ENCODE measurements at regions of chr1 and their contacts with region 1.

Region 1: DNA sequence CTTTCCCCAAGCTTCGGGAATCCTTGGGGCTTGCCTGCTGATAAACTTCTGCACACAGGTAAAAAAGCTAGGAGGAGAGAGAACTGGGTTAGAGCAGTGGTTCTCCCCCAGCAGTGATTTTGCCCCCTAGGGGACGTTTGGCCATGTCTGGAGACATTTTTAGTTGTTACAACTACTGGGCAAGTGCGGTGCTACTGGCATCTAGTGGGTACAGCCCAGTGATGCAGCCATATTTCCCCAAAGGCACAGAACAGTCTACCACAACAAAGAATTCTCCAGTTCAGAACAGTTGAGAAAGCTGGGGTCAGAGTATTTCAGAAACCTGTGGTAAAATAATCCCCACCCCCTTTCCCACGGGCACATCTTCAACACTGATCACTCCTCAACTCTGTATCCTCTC is 41.3 kb downstream of the LRRC71 start:
- DNase-seq: no peak
- H3K4me3 ChIP-seq: no peak overlapping the region
- H3K27ac ChIP-seq: no peak overlapping the region
- H3K4me1 ChIP-seq: no peaks in the 10 kb centered on the region
- H3K27me3 ChIP-seq: no peaks in the 10 kb centered on the region
- CTCF ChIP-seq: no peak

Region 2: DNA sequence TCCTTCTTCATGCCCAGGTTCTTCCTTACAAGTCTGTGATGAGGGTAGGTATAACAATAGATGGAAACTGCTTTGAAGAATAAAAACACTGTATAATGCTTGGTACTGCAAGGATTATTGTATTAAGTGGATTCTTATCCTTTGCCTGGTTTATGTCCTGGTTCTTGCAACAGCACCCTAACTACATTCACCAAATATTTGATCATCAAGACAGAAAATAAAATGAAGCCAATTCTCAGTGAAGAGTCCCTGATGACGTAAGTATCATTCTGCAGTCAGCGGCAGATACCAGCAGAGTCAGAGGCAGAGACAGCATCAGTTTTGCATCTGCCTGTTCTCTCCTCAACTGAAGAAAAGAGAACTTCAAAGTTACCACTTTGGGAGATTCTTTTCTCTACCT is 64.1 kb after region 1 on chr1:
- intact Hi-C with region 1: no loop called
- DNase-seq: no peak
- H3K4me3 ChIP-seq: no peak overlapping the region
- H3K27ac ChIP-seq: no peak overlapping the region
- H3K4me1 ChIP-seq: no peaks in the 10 kb centered on the region
- H3K27me3 ChIP-seq: no peaks in the 10 kb centered on the region
- CTCF ChIP-seq: no peak

Region 3: GRCh38 chr1:157073944-157074767 is 112.4 kb after region 1 on chr1:
- intact Hi-C with region 1: loop called (anchors 10 kb)
- DNase-seq: peak in 1 of 2 donors; percentile 73
- H3K4me3 ChIP-seq: peak overlapping the region; percentile 6 to 41
- H3K27ac ChIP-seq: no peak overlapping the region
- H3K4me1 ChIP-seq: no peaks in the 10 kb centered on the region
- H3K27me3 ChIP-seq: no peaks in the 10 kb centered on the region
- CTCF ChIP-seq: peak in 2 of 3 experiments; percentile 31 to 68

Region 4: DNA sequence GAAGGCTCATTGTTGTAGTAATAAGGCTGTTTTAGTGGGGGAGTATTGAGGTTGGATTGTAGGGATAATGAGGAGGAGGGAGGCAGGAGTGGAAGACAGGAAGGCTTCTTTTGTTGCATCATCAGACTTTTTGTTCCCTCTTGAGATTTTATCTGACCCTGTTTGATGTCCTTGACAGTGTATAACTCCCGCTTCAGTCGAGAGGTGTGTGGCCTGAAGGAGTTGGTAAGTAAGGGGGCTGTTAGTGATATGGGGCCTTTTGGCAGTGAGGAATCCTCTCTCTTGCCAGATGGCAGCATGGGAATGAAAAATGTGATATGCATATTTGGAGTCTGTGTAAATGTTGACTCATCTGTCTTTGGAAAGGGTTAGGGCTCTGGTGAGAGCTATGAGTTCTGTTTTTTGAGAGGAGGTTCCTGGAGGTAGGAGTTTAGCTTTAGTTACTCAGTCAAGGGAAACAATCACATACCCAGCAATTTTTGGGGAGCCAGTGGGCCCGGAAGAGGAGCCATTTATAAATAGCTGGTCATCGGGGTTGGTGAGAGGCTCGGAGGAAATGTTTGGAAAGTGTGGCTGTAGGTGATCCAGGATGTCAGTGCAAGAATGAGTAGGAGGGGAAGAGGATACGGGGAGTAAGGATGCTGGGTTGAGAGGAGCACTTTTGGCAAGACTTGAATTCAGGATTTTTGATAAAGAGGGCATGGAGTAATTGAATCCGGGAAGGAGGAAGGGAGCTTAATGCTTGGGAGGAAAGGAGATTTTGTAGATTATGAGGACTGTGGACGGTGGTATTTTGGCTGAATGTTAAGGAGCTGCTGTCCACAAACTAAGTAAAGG is 313.2 kb after region 1 on chr1:
- intact Hi-C with region 1: no loop called
- DNase-seq: no peak
- H3K4me3 ChIP-seq: no peak overlapping the region
- H3K27ac ChIP-seq: no peak overlapping the region
- H3K4me1 ChIP-seq: no peaks in the 10 kb centered on the region
- H3K27me3 ChIP-seq: no peaks in the 10 kb centered on the region
- CTCF ChIP-seq: no peak

Measured in ascending aorta (tissue), 2 donors.